Lower lobe of right lung (tissue), 2 donors: ENCODE measurements at regions of chr10 and their contacts with region 1.

Region 1: DNA sequence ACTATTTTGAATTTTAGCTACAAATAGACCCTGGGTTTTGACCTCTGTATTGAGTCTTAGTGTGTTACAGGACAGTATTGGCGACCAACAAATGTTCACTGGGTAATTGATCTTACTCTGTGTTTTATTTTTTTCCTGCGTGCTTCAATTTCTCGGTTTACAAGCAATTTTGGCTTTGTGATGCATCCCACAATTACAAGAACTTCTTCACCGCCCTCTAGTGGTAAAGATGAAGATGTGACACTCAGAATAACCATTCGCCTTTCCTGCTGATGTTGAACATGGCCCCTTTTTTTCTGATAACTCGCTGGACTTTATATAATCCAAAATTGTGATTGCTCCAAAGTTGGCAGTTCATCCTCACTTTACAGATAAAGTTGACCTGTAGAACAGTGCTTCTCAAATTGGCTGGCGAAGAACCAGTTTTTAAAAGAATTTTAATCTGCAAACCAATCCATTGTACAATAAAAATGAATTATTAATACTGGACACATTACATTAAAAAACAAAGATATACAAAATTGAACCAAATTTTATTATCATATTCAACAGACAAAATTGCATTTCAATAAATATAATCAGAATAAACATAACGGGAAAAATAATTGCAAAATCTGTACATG is 20.2 kb upstream of the SMC3 start:
- DNase-seq: no peak
- ATAC-seq: peak; percentile 69 to 75
- H3K4me3 ChIP-seq: no peak overlapping the region
- H3K27ac ChIP-seq: no peak overlapping the region
- H3K4me1 ChIP-seq: peaks cover 12% of the 10 kb centered on the region
- H3K27me3 ChIP-seq: no peaks in the 10 kb centered on the region
- CTCF ChIP-seq: peak; percentile 82

Region 2: DNA sequence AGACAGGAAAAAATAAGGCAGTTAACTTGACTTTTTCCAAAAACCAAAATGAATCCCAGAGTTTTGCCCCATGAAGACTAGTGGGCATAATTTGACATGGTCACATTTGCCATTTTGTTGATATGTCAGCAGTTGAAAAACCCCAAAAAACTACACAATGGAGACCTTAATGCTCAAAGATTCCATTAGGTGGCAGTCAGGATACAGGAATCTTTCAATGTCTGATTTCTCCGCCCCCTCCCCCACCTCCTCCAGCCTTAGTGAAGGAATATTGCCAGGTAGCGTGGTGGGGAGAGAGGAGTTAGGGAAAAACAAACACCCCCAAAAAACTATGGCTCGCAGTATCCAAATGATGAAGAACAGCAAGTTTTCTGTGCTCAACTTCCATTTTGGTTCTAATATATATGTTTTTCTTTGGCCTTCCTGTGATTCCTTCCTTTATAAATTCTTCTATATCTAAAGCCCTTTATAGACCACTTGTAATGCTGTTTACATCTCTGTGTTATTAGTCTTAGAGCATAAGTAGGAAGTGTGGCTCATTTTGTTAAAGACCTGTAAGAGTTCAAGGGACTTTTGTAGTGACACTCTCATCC is 235.8 kb before region 1 on chr10:
- intact Hi-C with region 1: loop called (anchors 5 kb)
- DNase-seq: no peak
- ATAC-seq: peak; percentile 68 to 83
- H3K4me3 ChIP-seq: no peak overlapping the region
- H3K27ac ChIP-seq: no peak overlapping the region
- H3K4me1 ChIP-seq: peaks cover 6% of the 10 kb centered on the region
- H3K27me3 ChIP-seq: no peaks in the 10 kb centered on the region
- CTCF ChIP-seq: peak; percentile 61

Region 3: GRCh38 chr10:110497438-110498086 is 49.7 kb before region 1 on chr10 and contains the start of gene DUSP5:
- intact Hi-C with region 1: no loop called
- DNase-seq: peak; percentile 96
- ATAC-seq: peak; percentile 96
- H3K4me3 ChIP-seq: peak within 1 kb of the TSS; percentile 83
- H3K27ac ChIP-seq: peak within 1 kb of the TSS; percentile 90
- H3K4me1 ChIP-seq: peaks cover 57% of the 10 kb centered on the region
- H3K27me3 ChIP-seq: peaks cover 5% of the 10 kb centered on the region
- CTCF ChIP-seq: no peak
- total RNA-seq, gene DUSP5: 8.9 TPM